ENCODE measurements at regions of chr20 and their contacts with region 1.

Region 1: GRCh38 chr20:17504898-17505635 is 26.1 kb downstream of the BFSP1 start:
- DNase-seq: peak; percentile 90

Region 2: GRCh38 chr20:17617551-17618223 is 112.6 kb after region 1 on chr20:
- intact Hi-C with region 1: loop called (anchors 1 to 2 kb)
- DNase-seq: peak; percentile 86

Region 3: DNA sequence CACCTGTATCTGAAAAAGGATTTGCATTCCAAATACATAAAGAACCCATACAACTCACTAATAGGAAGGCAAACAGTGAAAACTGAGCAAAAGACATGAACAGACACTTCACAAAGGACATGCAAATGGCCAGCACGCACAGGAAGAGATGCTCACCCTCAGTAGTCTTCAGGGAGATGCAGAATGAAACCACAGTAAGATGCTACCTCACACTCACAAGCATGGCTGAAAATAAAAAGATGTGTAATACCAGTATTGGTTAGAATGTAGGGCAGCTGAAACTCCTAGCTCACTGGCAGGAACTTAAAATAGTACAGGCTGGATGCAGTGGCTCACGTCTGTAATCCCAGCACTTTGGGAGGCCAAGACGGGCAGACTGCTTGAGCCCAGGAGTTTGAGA is 399.0 kb after region 1 on chr20:
- intact Hi-C with region 1: loop called (anchors 10 kb)
- DNase-seq: no peak

Region 4: GRCh38 chr20:17938871-17939619 is 434.0 kb after region 1 on chr20:
- intact Hi-C with region 1: loop called in 1 of 2 experiments (anchors 10 kb)
- DNase-seq: peak; percentile 91

Region 5: DNA sequence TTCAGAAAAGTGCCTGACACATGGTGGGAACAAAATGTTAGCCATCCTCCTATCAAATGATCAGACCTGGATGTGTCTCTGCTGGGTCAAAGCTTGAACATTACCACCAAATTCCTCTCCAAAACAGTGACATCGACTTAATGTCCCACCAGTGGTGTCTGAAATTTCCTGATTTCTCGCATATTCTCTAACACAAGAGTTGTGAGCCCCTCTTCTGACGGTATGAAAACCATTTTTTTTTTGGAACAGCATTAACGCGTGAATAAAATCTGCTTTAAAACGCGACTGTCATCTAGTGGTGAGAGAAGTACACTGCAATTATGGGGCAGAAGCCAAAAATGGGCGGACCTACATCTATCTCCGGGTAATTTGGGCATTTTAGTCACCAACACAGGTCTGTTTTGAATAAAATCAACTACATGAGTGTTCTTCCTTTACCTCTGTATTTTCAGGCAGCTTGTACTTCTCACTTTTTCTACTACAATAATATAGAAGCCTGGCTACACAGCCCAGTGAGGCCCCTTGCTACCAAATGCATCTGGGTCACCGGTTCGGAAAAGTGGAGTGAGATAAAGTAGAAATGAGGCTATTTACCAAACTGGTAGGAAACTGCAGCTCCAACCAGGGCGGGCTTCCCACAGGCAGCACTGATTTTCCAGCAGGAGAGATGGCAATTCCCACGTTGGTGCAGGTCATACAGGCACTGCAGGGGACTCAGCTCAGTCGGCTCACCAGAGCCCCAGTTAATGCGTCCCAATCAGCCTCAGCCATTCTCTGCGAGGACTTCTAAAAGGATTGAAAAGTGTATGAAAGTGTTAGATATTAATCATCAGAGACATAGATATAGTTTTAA is 491.1 kb after region 1 on chr20:
- intact Hi-C with region 1: loop called (anchors 10 kb)
- DNase-seq: no peak

Measured in posterior vena cava (tissue), 2 donors.